Activated naive CD4-positive, alpha-beta T cell treated with anti-CD3 and anti-CD28 coated beads for 36 hours (primary cell): ENCODE measurements at regions of chr9 and their contacts with region 1.

Region 1: GRCh38 chr9:35051069-35051967 is 21.1 kb downstream of the VCP start:
- DNase-seq: peak; percentile 71
- H3K4me3 Mint-ChIP-seq: no peak overlapping the region
- H3K27ac Mint-ChIP-seq: no peak overlapping the region
- H3K4me1 Mint-ChIP-seq: no peaks in the 10 kb centered on the region
- H3K27me3 Mint-ChIP-seq: no peaks in the 10 kb centered on the region

Region 2: GRCh38 chr9:34759432-34760134 is 291.7 kb before region 1 on chr9:
- CTCF ChIA-PET with region 1: interaction called, 3 read pairs
- intact Hi-C with region 1: loop called (anchors 5 kb)
- DNase-seq: no peak
- H3K4me3 Mint-ChIP-seq: no peak overlapping the region
- H3K27ac Mint-ChIP-seq: no peak overlapping the region
- H3K4me1 Mint-ChIP-seq: peaks cover 2% of the 10 kb centered on the region
- H3K27me3 Mint-ChIP-seq: peaks cover 32% of the 10 kb centered on the region

Region 3: GRCh38 chr9:34994260-34994899 is 56.9 kb before region 1 on chr9:
- CTCF ChIA-PET with region 1: interaction called, 13 read pairs
- intact Hi-C with region 1: loop called (anchors 5 kb)
- DNase-seq: no peak
- H3K4me3 Mint-ChIP-seq: peak overlapping the region; percentile 0
- H3K27ac Mint-ChIP-seq: no peak overlapping the region
- H3K4me1 Mint-ChIP-seq: peaks cover 56% of the 10 kb centered on the region
- H3K27me3 Mint-ChIP-seq: no peaks in the 10 kb centered on the region

Region 4: GRCh38 chr9:35029852-35030251 is 21.5 kb before region 1 on chr9:
- CTCF ChIA-PET with region 1: interaction called, 13 read pairs
- intact Hi-C with region 1: no loop called
- DNase-seq: no peak
- H3K4me3 Mint-ChIP-seq: no peak overlapping the region
- H3K27ac Mint-ChIP-seq: no peak overlapping the region
- H3K4me1 Mint-ChIP-seq: peaks cover 10% of the 10 kb centered on the region
- H3K27me3 Mint-ChIP-seq: no peaks in the 10 kb centered on the region

Region 5: DNA sequence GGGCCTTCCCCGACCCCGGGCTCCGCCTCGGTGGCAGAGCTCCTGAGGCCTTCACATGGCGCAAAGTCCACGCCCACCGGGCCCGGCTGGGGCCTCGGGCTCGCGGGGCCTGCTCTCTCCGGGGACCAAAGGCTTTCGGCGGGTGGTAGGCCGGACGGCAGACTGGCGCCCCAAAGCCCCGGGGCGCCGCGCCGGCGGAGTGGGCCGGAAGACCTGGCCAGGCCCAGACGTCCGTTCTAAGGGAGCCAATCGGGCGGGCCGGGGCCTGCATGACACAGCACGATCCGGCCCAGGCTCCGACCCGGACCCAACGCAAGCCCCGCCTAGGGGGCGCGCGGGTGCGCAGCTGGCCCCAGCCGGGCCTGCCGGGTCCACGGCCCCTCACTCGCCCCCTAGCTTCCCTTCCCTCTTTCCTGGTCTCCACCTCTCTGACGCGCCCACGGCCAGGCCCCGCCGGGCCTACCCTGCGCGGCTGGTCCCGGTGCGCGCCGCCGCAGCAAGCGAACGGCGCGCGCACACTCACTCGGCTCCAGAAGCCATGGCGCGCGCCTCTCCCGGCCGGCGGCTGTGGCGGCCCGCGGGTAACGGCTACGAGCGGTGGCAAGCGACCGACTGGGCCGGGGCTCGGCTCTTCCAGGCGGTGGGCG is 20.6 kb after region 1 on chr9:
- CTCF ChIA-PET with region 1: interaction called, 16 read pairs
- intact Hi-C with region 1: no loop called
- DNase-seq: peak; percentile 77
- H3K4me3 Mint-ChIP-seq: peak overlapping the region; percentile 92
- H3K27ac Mint-ChIP-seq: peak overlapping the region; percentile 96
- H3K4me1 Mint-ChIP-seq: peaks cover 57% of the 10 kb centered on the region
- H3K27me3 Mint-ChIP-seq: no peaks in the 10 kb centered on the region

Region 6: DNA sequence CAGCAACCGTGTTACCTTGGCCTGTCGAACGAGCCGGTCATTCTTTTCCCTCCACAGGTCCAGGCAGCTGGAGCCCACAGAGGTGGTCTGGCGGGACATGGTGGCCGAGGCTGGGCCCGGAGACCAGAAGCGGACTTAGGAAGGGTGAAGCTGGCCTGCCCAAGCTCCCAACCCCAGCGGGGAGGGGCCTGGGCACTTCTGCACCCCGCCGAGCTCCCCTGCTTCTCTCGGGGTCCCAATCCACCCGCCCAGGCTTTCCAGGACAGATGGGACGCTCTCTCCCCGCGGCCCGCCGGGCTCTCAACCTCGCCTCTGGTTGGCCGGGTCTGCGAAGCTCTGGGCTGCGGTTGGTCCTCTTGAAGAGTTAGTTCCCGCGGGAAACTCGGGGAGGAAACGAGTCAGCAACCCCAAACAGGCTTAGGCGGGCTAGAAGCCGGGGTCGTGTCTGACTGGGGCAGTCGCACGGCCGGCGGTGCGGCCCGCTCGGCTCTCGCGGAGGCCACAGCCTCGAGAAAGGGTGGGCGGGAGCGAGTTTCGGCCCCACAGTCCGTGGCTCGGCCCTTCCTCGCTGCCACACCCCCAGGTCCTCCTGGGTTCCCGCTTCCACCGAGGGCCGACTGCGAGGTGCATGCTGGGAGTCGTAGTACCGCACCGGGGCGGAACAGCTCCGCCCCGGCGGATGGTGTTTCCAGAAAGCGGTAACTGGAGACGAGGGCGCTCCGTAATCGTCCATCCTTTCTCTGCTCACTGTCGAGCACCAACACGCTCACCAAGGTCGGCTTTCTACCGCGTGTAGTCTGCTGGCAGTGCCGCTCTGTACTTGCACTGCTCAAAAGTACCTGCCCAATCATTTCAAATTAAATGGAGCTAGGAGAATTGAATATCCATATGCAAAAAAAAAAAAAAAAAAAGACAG is 28.4 kb after region 1 on chr9 and contains the start of gene FANCG:
- CTCF ChIA-PET with region 1: interaction called, 12 read pairs
- intact Hi-C with region 1: no loop called
- DNase-seq: peak; percentile 92
- H3K4me3 Mint-ChIP-seq: peak within 1 kb of the TSS; percentile 94
- H3K27ac Mint-ChIP-seq: peak within 1 kb of the TSS; percentile 98
- H3K4me1 Mint-ChIP-seq: peaks cover 19% of the 10 kb centered on the region
- H3K27me3 Mint-ChIP-seq: no peaks in the 10 kb centered on the region
- total RNA-seq, gene FANCG: 109 to 118 TPM

Region 7: GRCh38 chr9:35179347-35180287 is 128.3 kb after region 1 on chr9:
- CTCF ChIA-PET with region 1: no interaction called
- intact Hi-C with region 1: no loop called
- DNase-seq: no peak
- H3K4me3 Mint-ChIP-seq: no peak overlapping the region
- H3K27ac Mint-ChIP-seq: no peak overlapping the region
- H3K4me1 Mint-ChIP-seq: no peaks in the 10 kb centered on the region
- H3K27me3 Mint-ChIP-seq: no peaks in the 10 kb centered on the region